Activated CD8-positive, alpha-beta memory T cell treated with anti-CD3 and anti-CD28 coated beads, Interleukin-2, amount 10 ng/mL, durations not matched to agents 7 days and 5 days (primary cell): ENCODE measurements at regions of chr13 and their contacts with region 1.

Region 1: DNA sequence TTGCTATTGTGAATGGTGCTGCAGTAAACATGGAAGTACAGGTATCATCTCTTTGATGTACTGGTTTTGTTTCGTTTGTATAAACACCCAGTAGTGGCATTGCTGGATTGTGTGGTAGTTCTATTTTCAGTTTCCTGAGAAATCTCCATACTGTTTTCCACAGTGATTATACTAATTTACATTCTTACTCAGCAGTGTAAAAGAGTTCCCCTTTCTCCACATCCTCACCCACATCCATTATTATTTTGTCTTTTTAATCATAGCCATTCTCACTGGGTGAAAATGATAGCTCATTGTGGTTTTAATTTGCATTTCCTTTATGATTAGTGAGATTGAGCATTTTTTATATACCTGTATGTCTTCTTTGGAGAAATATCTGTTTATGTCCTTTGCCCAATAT is 62.3 kb upstream of the PARP4 start:
- DNase-seq: no peak
- ATAC-seq: no peak
- H3K4me3 Mint-ChIP-seq: no peak overlapping the region
- H3K27ac Mint-ChIP-seq: no peak overlapping the region
- H3K4me1 Mint-ChIP-seq: peaks cover 16% of the 10 kb centered on the region
- H3K27me3 Mint-ChIP-seq: peaks cover 5% of the 10 kb centered on the region

Region 2: DNA sequence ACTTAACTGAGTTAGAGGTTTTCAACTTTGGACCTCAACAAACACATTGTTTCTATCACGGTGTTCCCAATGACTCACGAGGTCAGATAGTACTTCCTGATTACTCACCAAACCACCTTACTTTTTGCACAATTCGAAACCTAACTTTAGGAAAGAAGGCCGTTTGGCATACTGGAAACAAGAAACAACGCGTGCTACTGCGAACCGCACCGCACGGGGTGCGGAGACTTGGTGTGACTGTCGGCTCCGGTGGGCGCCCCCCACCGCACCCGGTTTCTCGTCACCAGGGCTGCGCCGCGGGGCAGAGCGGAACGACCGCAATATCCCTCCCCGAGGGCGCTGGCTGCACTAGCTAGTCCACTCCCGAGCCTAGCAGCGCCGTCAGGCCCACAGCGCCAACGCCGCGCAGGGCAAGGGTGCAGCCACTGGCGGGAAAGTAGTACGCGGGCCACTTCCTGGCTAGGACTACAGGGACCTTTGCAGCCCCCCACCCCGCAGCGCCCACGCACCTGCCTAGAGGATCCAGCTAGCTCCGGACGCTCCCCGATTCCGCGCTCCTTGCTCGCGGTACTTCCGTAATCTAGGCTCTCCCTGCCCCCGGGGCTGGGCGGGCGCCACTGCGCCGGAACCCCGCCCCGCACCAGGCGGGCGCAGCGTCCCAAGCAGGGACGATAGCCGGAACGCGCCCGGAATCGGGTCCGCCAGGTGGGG is 62.5 kb before region 1 on chr13 and contains the start of gene PARP4:
- CTCF ChIA-PET with region 1: no interaction called
- DNase-seq: peak; percentile 83
- ATAC-seq: peak; percentile 90
- H3K4me3 Mint-ChIP-seq: peak within 1 kb of the TSS; percentile 86
- H3K27ac Mint-ChIP-seq: peak within 1 kb of the TSS; percentile 91
- H3K4me1 Mint-ChIP-seq: peaks cover 39% of the 10 kb centered on the region
- H3K27me3 Mint-ChIP-seq: peaks cover 3% of the 10 kb centered on the region
- total RNA-seq, gene PARP4: 75.0 to 78.8 TPM

Region 3: GRCh38 chr13:24540236-24541126 is 34.4 kb before region 1 on chr13:
- CTCF ChIA-PET with region 1: no interaction called
- DNase-seq: no peak
- ATAC-seq: no peak
- H3K4me3 Mint-ChIP-seq: no peak overlapping the region
- H3K27ac Mint-ChIP-seq: no peak overlapping the region
- H3K4me1 Mint-ChIP-seq: peaks cover 11% of the 10 kb centered on the region
- H3K27me3 Mint-ChIP-seq: peaks cover 61% of the 10 kb centered on the region

Region 4: DNA sequence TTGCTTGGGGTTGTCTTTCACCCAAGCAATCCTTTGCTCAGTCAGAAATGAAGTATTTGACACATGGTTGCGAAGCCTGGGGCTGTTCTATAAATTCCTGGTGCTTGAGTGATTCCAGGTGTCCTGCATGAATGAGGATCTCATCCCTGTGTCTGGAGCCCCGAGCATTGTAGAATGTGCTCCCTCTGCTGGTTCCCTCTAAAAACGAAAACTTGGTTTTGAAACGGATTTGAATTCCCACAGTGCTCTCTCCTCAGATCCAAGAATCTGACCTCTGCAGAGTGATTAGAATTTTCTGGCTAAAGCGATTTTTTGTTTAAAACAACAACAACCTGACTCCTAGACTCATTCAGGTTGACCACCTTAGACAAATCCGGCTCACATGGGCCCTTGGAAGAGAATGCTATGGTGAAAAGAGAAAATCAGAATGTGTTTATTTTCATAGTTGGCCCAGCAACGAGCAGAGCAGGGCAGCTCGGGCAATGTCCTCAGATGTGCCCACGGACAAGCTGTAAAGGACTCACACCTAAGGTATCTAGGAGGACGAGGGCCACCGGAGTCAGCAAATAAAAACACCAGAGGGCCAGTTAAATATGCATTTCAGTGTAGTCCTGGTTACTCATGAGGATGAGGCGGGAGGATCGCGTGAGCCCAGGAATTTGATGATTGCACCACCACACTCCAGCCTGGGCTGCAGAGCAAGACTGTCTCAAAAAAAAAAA is 96.7 kb after region 1 on chr13:
- CTCF ChIA-PET with region 1: interaction called, 23 read pairs
- DNase-seq: no peak
- ATAC-seq: peak; percentile 30
- H3K4me3 Mint-ChIP-seq: no peak overlapping the region
- H3K27ac Mint-ChIP-seq: no peak overlapping the region
- H3K4me1 Mint-ChIP-seq: peaks cover 20% of the 10 kb centered on the region
- H3K27me3 Mint-ChIP-seq: peaks cover 4% of the 10 kb centered on the region

Region 5: GRCh38 chr13:24683838-24684599 is 109.2 kb after region 1 on chr13:
- CTCF ChIA-PET with region 1: interaction called, 11 read pairs
- DNase-seq: peak; percentile 81
- ATAC-seq: peak; percentile 77
- H3K4me3 Mint-ChIP-seq: no peak overlapping the region
- H3K27ac Mint-ChIP-seq: peak overlapping the region; percentile 68
- H3K4me1 Mint-ChIP-seq: peaks cover 43% of the 10 kb centered on the region
- H3K27me3 Mint-ChIP-seq: peaks cover 41% of the 10 kb centered on the region